ENCODE measurements at regions of chr4 and their contacts with region 1.

Region 1: GRCh38 chr4:159102622-159103383 is at the start of gene RAPGEF2:
- DNase-seq: peak; percentile 91
- H3K4me3 ChIP-seq: peak within 1 kb of the TSS; percentile 96
- H3K27ac ChIP-seq: peak within 1 kb of the TSS; percentile 97
- H3K4me1 ChIP-seq: peaks cover 49% of the 10 kb centered on the region
- H3K27me3 ChIP-seq: no peaks in the 10 kb centered on the region
- CTCF ChIP-seq: no peak
- total RNA-seq, gene RAPGEF2: 51.5 TPM

Region 2: GRCh38 chr4:158778156-158778711 is 324.6 kb before region 1 on chr4:
- intact Hi-C with region 1: no loop called
- DNase-seq: no peak
- H3K4me3 ChIP-seq: no peak overlapping the region
- H3K27ac ChIP-seq: peak overlapping the region; percentile 81
- H3K4me1 ChIP-seq: peaks cover 90% of the 10 kb centered on the region
- H3K27me3 ChIP-seq: no peaks in the 10 kb centered on the region
- CTCF ChIP-seq: no peak

Region 3: DNA sequence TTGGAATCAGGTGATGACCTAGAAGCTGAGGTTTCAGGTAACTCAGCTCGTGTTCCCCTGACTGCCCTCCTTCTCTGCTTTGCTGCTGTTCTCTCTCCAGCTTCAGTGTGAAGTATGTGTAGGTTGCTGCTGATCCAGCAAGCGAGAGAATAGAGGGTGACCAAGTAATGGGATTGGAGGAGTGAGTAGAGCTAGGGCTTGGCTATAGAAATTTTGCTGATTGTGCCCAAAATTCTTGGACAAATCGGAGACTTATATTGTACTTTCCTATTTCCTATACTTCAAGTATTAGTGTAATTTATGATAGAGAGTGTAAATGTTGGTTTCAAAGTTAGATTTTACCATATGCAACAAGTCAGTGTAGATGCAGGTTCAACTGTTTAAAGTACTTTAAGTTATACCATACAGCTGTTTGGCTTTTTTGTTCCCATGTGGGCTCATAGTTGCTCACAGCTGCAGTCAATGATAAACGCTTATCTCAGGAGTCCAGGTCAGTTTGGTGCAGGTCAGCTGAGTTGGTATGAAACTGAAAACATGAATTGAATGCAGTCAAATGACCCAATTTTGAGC is 48.1 kb after region 1 on chr4:
- intact Hi-C with region 1: loop called (anchors 10 kb)
- DNase-seq: no peak
- H3K4me3 ChIP-seq: no peak overlapping the region
- H3K27ac ChIP-seq: no peak overlapping the region
- H3K4me1 ChIP-seq: peaks cover 98% of the 10 kb centered on the region
- H3K27me3 ChIP-seq: no peaks in the 10 kb centered on the region
- CTCF ChIP-seq: no peak

Measured in left ventricle myocardium inferior (tissue), 1 donor.